Left ventricle myocardium superior (tissue), 1 donor: ENCODE measurements at regions of chr3 and their contacts with region 1.

Region 1: DNA sequence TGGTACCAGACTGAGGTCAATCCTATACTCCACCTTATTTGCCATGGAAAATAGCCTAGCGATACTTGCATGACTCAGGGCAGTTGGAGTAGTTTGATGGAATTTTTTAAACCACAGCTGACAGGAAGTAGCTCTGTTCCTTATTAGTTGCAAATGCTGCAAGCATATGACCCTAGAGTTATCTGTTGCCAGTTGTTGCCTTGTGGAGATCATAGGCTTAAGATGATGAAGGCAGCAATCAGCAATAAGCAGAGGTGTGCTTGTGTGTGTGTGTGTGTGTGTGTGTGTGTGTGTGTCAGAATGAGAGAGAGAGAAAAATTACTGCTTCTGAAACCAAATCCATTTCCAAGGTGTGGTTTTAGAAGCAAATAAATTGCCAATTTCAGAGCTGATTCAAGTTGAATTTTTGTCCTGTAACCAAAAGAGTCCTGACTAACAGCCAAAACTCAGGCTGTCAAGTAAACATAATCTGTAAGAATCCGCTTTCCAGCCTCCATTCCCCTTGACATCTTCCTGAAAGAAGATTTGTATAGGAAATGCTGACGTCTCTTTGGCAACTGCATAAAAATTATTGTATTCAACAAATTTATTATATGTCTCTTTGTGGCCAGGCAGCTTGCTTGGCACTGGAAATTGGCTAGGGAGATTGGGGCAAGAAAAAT is 141.2 kb downstream of the SERPINI1 start:
- DNase-seq: no peak
- ATAC-seq: peak; percentile 71

Region 2: GRCh38 chr3:167839460-167840134 is 37.2 kb before region 1 on chr3:
- intact Hi-C with region 1: loop called (anchors 2 kb)
- DNase-seq: no peak
- ATAC-seq: peak; percentile 21

Region 3: DNA sequence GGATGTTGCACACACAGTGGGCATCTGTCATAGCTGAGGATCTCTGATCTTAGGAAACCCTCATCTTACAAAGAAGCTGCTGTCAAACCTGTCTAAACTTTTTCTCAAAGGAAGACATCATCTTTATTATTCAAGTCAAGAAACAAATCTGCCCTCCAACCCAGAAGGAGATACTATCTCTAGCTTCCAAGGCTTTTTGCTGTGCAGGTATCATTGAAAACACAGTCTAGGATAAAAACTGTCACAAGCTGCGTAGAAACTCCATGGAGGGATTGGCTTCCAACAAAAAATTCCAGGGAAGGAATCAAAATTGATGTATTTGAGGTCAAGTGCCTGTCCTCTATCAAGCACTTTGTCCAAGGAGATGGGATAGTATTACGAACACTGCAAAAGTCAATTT is 129.8 kb after region 1 on chr3:
- intact Hi-C with region 1: no loop called
- DNase-seq: no peak
- ATAC-seq: no peak

Region 4: DNA sequence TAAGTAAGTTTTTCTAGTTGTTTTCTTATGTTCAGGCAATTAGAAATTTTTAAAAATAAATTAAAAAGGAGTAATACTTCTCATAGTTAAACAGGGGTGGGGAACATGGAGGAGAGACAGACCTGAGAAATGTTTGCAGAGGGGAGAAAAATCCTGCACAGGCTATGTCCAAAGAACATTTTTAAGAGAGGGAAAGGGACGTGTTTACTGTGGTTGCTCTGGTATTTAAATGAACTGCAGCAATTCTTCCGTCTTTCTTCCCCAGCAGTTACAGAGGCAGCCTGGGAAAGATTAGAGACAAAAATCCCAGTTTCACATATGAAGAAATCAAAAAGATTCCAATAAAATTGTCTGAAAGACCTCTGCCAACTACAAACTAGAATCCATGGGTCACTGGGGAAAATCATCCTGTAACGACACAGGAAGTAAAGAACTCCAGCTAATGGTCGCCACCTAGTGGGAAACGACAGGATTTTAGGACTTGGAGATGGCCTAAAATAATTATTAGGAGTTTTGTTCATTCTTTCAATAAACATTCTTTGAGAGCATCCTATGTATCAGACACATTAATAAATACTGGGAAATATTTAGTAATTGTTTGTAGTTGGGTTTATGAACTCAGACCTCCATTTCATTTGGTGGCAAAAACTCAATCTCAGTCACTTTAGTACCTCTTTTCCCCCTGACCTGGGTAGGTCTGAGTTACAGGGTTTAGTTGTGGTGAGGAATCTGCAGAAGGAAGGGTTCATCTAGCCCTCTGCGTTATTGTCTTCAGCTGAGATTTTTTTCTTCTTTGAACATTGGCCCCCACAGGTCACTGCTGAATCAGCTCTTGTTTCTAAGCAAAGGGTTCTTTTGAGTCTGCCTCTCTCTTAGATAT is 288.9 kb after region 1 on chr3:
- intact Hi-C with region 1: no loop called
- DNase-seq: no peak
- ATAC-seq: peak; percentile 83